ENCODE measurements at regions of chr22 and their contacts with region 1.

Region 1: DNA sequence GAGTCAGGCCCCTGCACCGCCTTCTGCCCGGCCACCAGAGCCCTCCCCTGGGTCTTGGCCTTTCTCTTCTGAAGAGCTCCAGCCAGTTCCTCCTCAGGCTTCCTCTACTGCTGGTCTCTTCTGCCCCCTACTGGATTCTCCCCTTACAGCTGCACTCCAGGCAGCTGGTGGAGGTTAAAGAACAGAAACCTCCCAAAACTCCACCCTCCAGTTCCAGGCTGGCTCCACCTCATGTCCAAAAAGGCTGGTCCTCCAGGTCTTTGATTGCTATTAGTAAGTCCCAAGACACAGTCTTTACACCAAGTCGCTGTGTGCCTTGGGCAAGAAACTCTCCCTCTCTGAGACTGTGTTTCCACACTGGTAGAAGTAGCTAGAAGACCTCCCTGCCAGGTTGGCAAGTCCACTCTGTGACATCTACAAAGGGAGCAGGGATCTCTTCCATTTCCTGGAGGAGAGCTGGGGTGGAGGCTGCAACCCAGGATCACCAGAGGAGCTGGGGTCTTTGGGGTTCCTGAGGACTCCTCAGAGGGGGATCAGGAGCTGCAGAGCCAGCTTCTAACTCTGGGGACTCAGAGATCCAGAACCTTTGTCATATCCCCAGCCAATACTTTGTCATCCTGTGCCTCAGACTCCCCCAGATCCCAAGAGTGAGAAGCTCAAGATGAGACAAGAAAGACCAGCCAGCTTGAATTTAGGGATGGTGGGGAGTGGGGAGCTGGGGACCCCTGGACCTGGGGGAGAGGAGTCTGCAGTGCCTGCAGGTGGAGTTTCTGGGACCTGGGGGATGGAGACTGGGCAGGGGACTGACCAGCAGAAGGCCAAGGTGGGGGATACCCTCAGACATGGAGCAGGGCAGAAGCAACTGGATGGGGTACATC is 3.4 kb upstream of the IGLL5 start:
- DNase-seq: peak; percentile 39 to 77 (median 65)
- ATAC-seq: peak; percentile 81
- H3K4me3 ChIP-seq: no peak overlapping the region
- H3K4me3 Mint-ChIP-seq: no peak overlapping the region
- H3K27ac ChIP-seq: no peak overlapping the region
- H3K27ac Mint-ChIP-seq: peak overlapping the region in 2 of 9 donors; percentile 55
- H3K4me1 ChIP-seq: no peaks in the 10 kb centered on the region
- H3K4me1 Mint-ChIP-seq: peaks cover 0 to 13% (median 0%) of the 10 kb centered on the region in 7 donors
- H3K27me3 ChIP-seq: no peaks in the 10 kb centered on the region
- H3K27me3 Mint-ChIP-seq: peaks cover 0 to 41% (median 0%) of the 10 kb centered on the region in 5 donors

Region 2: GRCh38 chr22:22710719-22711531 is 173.3 kb before region 1 on chr22:
- CTCF ChIA-PET with region 1: interaction called, 23 read pairs
- POLR2A ChIA-PET with region 1: no interaction called
- intact Hi-C with region 1: loop called (anchors 1 to 5 kb)
- DNase-seq: peak; percentile 46 to 79 (median 64)
- ATAC-seq: peak; percentile 66
- H3K4me3 ChIP-seq: no peak overlapping the region
- H3K4me3 Mint-ChIP-seq: no peak overlapping the region
- H3K27ac ChIP-seq: no peak overlapping the region
- H3K27ac Mint-ChIP-seq: no peak overlapping the region
- H3K4me1 ChIP-seq: no peaks in the 10 kb centered on the region
- H3K4me1 Mint-ChIP-seq: peaks cover 0 to 3% (median 0%) of the 10 kb centered on the region in 7 donors
- H3K27me3 ChIP-seq: no peaks in the 10 kb centered on the region
- H3K27me3 Mint-ChIP-seq: peaks cover 0 to 6% (median 0%) of the 10 kb centered on the region in 5 donors

Region 3: DNA sequence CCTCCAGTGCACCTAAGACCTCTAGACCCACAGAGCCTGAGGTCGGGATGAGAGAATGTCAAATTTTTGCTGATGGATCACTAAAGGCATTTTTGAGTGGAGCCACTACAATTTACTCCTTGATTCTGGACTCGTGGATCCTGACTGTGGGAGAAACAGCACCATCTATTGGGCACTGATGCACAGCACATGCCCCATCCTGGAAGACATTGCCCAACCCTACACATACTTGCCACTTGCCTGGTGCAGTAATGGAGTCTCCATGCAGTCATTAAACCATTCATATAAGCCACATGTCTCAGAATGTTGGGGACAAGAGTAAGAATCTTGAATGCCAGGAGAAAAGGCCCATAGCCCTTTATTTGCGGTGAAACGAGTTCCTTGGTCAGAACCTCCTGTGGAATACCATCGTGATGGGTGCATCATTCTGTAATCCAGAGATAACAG is 135.9 kb before region 1 on chr22:
- CTCF ChIA-PET with region 1: interaction called, 148 read pairs
- POLR2A ChIA-PET with region 1: interaction called, 3 read pairs
- intact Hi-C with region 1: loop called (anchors 1 kb)
- DNase-seq: peak in 6 of 9 donors; percentile 17 to 34 (median 26)
- ATAC-seq: peak; percentile 78
- H3K4me3 ChIP-seq: no peak overlapping the region
- H3K4me3 Mint-ChIP-seq: no peak overlapping the region
- H3K27ac ChIP-seq: no peak overlapping the region
- H3K27ac Mint-ChIP-seq: peak overlapping the region in 2 of 9 donors; percentile 21 to 34
- H3K4me1 ChIP-seq: peaks cover 6 to 30% of the 10 kb centered on the region in 2 donors
- H3K4me1 Mint-ChIP-seq: peaks cover 2 to 23% (median 15%) of the 10 kb centered on the region in 7 donors
- H3K27me3 ChIP-seq: no peaks in the 10 kb centered on the region
- H3K27me3 Mint-ChIP-seq: peaks cover 0 to 19% (median 4%) of the 10 kb centered on the region in 5 donors

Region 4: DNA sequence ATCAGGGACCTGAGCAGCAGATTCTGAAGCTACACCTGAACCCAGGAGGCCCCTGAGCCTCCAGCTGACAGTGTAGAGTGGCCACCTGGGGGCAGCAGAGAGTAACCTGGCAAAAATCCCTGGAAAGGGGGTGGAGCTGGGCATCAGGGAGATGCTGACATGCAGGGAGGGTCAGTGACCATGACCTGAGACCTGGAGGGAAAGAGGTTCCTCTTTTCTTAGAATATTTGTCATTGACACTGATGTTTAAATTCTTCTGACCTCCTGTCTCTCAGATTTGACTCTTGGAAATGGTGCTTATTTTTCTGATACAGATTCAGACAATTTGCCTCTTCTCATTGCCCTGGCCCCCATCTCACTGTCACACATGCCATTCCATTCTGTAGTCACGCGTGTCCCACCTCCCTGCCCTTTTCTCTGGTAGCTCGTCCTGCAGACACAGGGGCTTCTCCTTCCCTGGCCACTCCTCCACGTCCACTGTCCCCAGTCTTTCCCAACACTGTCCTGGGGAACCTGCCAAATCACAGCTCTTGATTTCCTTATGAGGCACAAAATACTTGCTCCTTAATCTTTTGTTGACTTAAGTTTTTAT is 113.9 kb before region 1 on chr22:
- CTCF ChIA-PET with region 1: interaction called, 15 read pairs
- POLR2A ChIA-PET with region 1: no interaction called
- intact Hi-C with region 1: no loop called
- DNase-seq: peak in 7 of 9 donors; percentile 9 to 52 (median 28)
- ATAC-seq: peak; percentile 75
- H3K4me3 ChIP-seq: no peak overlapping the region
- H3K4me3 Mint-ChIP-seq: no peak overlapping the region
- H3K27ac ChIP-seq: no peak overlapping the region
- H3K27ac Mint-ChIP-seq: peak overlapping the region in 1 of 9 donors; percentile 18
- H3K4me1 ChIP-seq: peaks cover 0 to 49% of the 10 kb centered on the region in 2 donors
- H3K4me1 Mint-ChIP-seq: peaks cover 0 to 6% (median 0%) of the 10 kb centered on the region in 7 donors
- H3K27me3 ChIP-seq: no peaks in the 10 kb centered on the region
- H3K27me3 Mint-ChIP-seq: peaks cover 5 to 26% (median 11%) of the 10 kb centered on the region in 5 donors

Region 5: DNA sequence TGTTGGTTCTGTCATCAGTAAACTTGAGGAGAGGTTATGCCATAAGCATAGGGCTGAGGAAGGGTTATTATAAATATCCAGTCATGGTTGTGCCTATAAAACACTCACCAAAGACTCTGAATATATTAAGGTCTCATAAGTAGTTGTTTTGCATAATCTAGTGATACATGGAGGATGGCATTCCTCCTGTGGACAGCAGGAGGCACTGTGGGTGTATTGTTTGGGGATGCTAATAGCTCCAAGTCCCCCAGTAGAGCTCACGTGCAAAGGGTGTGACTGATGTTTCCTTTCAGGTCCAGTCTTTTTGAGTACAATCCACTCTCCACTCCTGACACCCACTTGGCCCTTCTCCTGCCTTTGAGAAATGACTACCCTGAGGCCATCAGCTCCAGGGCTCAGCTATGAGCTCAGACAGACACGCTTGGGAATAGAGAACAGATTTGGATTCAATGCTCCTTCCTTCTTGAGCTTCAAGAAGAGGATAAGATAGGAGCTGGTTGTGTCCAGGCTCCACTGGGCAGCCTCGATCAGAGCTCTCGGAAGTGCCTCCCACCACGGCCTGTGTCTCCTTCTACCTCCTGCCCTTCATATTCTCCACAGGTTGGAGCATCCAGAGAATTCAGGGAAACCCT is 81.8 kb before region 1 on chr22:
- CTCF ChIA-PET with region 1: interaction called, 322 read pairs
- POLR2A ChIA-PET with region 1: interaction called, 4 read pairs
- intact Hi-C with region 1: loop called (anchors 1 kb)
- DNase-seq: peak in 5 of 9 donors; percentile 26 to 53 (median 34)
- ATAC-seq: peak; percentile 79
- H3K4me3 ChIP-seq: no peak overlapping the region
- H3K4me3 Mint-ChIP-seq: no peak overlapping the region
- H3K27ac ChIP-seq: no peak overlapping the region
- H3K27ac Mint-ChIP-seq: peak overlapping the region in 1 of 9 donors; percentile 10
- H3K4me1 ChIP-seq: peaks cover 0 to 41% of the 10 kb centered on the region in 2 donors
- H3K4me1 Mint-ChIP-seq: peaks cover 0 to 29% (median 16%) of the 10 kb centered on the region in 7 donors
- H3K27me3 ChIP-seq: no peaks in the 10 kb centered on the region
- H3K27me3 Mint-ChIP-seq: peaks cover 0 to 51% (median 0%) of the 10 kb centered on the region in 5 donors

Region 6: DNA sequence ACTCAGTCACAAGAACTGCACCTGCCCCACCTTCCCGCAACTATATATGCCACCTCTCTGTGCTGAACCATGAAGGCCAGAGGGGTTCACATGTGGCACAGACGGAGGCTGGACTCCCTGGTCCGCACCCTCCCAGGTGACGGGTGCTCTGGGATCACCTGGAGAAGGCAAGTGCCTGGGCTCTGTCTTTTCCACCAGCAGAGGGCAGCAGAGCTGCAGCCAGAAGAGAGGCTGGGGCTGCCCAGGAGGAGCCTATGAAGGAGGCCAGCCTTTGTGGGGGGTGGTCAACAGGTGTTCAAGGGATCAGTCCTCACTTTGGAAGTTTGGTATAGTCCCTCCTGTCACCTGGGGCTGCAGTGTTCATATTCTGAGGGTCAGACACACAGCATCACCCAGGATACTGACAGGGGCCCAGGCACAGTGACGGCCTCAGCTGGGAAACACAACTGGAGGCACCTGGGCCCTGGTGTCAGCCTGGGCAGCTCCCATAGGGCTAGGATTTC is 35.8 kb before region 1 on chr22:
- CTCF ChIA-PET with region 1: interaction called, 94 read pairs
- POLR2A ChIA-PET with region 1: interaction called, 3 read pairs
- intact Hi-C with region 1: no loop called
- DNase-seq: peak; percentile 35 to 75 (median 52)
- ATAC-seq: peak; percentile 83
- H3K4me3 ChIP-seq: no peak overlapping the region
- H3K4me3 Mint-ChIP-seq: no peak overlapping the region
- H3K27ac ChIP-seq: no peak overlapping the region
- H3K27ac Mint-ChIP-seq: peak overlapping the region in 3 of 9 donors; percentile 22 to 79 (median 52)
- H3K4me1 ChIP-seq: peaks cover 26 to 30% of the 10 kb centered on the region in 2 donors
- H3K4me1 Mint-ChIP-seq: peaks cover 8 to 57% (median 48%) of the 10 kb centered on the region in 7 donors
- H3K27me3 ChIP-seq: no peaks in the 10 kb centered on the region
- H3K27me3 Mint-ChIP-seq: peaks cover 0 to 59% (median 0%) of the 10 kb centered on the region in 5 donors